B cell (primary cell): ENCODE measurements at regions of chr4 and their contacts with region 1.

Region 1: DNA sequence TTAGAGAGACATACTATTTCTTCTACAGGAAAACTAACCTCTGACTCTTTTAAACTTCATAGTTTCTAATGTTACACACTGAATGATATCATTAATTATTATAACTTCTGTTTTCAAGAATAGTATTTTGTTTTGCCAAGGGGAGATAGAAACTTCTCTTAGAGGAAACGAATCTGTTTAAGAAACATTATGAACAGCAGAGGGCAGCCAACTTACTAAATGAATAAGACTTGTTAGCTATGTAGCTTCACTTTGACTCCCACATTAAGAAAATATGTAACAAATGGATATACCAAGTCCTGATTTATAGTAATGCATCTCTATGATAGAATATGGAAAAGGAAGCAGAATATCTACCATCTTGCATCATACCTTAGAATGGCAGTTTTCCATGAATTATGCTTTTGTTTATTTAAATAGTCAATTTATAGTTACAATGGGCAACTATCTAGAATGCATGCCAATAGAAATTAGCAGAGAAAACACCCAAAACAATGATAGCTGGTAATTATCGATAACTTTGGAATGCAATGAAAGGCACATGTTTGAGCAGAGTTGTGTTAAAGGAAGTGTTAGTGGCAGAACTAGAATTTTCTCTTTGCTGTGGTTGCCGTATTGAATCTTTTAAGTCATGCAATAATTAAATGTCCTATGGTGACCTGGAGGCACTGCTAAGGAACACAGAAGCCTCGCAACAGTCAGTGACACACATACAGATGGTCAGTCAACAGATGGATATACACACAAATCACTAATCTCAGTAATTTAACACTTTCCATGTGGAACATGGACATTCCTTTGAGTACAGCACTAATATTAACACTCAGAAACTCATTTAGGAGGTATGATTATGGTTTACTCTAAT is 105.7 kb upstream of the PDLIM3 start:
- DNase-seq: peak; percentile 49
- ATAC-seq: no peak
- H3K4me3 ChIP-seq: no peak overlapping the region
- H3K4me3 Mint-ChIP-seq: no peak overlapping the region
- H3K27ac ChIP-seq: no peak overlapping the region
- H3K27ac Mint-ChIP-seq: no peak overlapping the region
- H3K4me1 ChIP-seq: no peaks in the 10 kb centered on the region
- H3K4me1 Mint-ChIP-seq: peaks cover 2% of the 10 kb centered on the region
- H3K27me3 ChIP-seq: peaks cover 0 to 12% (median 6%) of the 10 kb centered on the region in 4 experiments
- H3K27me3 Mint-ChIP-seq: peaks cover 37% of the 10 kb centered on the region
- CTCF ChIP-seq: peak; percentile 42

Region 2: DNA sequence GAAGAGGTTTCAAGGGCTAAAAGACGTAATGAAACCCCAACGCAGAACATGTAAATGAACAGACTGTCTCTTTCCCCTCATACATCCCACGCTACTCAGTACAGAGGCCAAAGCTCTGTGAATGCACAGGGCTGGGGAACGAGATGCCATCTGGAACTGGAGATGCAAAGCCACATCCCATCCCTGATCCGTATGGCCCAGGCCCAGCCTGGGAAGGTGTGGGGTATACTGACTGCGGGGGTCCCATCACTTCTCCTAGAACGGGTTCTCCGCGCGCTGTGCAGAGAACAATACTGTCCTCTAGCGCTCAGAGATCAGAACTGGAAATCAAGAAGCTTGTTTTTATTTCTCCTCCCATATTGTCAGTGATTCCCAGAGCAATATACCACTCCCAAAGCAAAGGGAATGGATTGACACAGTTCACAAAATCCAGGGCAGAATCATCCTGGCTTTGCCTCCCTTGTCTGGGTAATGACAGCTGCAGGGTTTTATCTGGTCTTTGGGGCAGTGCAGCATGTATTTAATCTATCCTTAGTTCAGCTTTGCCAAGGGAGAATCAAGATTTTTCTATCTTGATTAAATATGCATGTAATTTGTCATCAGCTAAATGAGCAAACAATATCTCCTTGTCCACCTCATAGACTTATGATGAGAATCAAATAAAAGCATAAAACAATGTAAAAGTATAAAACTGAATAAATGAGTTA is 380.6 kb after region 1 on chr4:
- CTCF ChIA-PET with region 1: interaction called, 12 read pairs
- POLR2A ChIA-PET with region 1: no interaction called
- intact Hi-C with region 1: loop called (anchors 5 kb)
- DNase-seq: no peak
- ATAC-seq: no peak
- H3K4me3 ChIP-seq: no peak overlapping the region
- H3K4me3 Mint-ChIP-seq: no peak overlapping the region
- H3K27ac ChIP-seq: no peak overlapping the region
- H3K27ac Mint-ChIP-seq: no peak overlapping the region
- H3K4me1 ChIP-seq: no peaks in the 10 kb centered on the region
- H3K4me1 Mint-ChIP-seq: no peaks in the 10 kb centered on the region
- H3K27me3 ChIP-seq: peaks cover 0 to 7% (median 0%) of the 10 kb centered on the region in 4 experiments
- H3K27me3 Mint-ChIP-seq: peaks cover 57% of the 10 kb centered on the region
- CTCF ChIP-seq: peak; percentile 10

Region 3: GRCh38 chr4:186037692-186038658 is 396.9 kb after region 1 on chr4:
- CTCF ChIA-PET with region 1: interaction called, 32 read pairs
- POLR2A ChIA-PET with region 1: no interaction called
- intact Hi-C with region 1: no loop called
- DNase-seq: peak; percentile 64
- ATAC-seq: peak; percentile 33
- H3K4me3 ChIP-seq: no peak overlapping the region
- H3K4me3 Mint-ChIP-seq: no peak overlapping the region
- H3K27ac ChIP-seq: no peak overlapping the region
- H3K27ac Mint-ChIP-seq: no peak overlapping the region
- H3K4me1 ChIP-seq: no peaks in the 10 kb centered on the region
- H3K4me1 Mint-ChIP-seq: no peaks in the 10 kb centered on the region
- H3K27me3 ChIP-seq: peaks cover 0 to 12% (median 3%) of the 10 kb centered on the region in 4 experiments
- H3K27me3 Mint-ChIP-seq: peaks cover 30% of the 10 kb centered on the region
- CTCF ChIP-seq: peak; percentile 74

Region 4: GRCh38 chr4:186137196-186137794 is 496.3 kb after region 1 on chr4:
- CTCF ChIA-PET with region 1: interaction called, 7 read pairs
- POLR2A ChIA-PET with region 1: no interaction called
- intact Hi-C with region 1: loop called (anchors 2 kb)
- DNase-seq: peak; percentile 17
- ATAC-seq: no peak
- H3K4me3 ChIP-seq: no peak overlapping the region
- H3K4me3 Mint-ChIP-seq: no peak overlapping the region
- H3K27ac ChIP-seq: no peak overlapping the region
- H3K27ac Mint-ChIP-seq: no peak overlapping the region
- H3K4me1 ChIP-seq: peaks cover 0 to 7% of the 10 kb centered on the region in 2 donors
- H3K4me1 Mint-ChIP-seq: peaks cover 8% of the 10 kb centered on the region
- H3K27me3 ChIP-seq: no peaks in the 10 kb centered on the region
- H3K27me3 Mint-ChIP-seq: peaks cover 5% of the 10 kb centered on the region
- CTCF ChIP-seq: peak; percentile 65